ENCODE measurements at regions of chr14 and their contacts with region 1.

Region 1: DNA sequence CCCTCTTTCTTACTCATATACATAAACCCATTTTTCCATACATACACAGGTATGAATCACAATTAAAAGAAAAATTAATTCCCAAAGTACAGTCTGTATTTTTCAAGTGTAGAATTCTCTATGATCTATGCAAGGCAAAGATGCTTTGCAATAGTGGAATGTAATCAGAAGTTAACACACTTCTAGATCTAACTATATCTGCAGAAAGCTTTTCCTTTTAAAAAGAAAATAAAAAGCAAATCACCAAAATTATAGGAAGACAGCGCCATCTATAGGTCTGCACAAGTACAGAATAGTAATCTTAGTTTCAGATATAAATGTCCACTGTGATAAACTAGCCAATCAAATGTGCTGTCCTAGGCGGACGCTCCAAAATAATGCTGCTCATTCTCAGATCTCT is 22.0 kb downstream of the SLC25A21 start:
- DNase-seq: no peak
- ATAC-seq: peak; percentile 63
- H3K4me3 ChIP-seq: no peak overlapping the region
- H3K27ac ChIP-seq: no peak overlapping the region
- H3K4me1 ChIP-seq: no peaks in the 10 kb centered on the region
- H3K27me3 ChIP-seq: no peaks in the 10 kb centered on the region
- CTCF ChIP-seq: peak; percentile 51 to 76 (median 61)
- POLR2A ChIP-seq: no peak

Region 2: GRCh38 chr14:36553656-36554260 is 596.7 kb before region 1 on chr14:
- intact Hi-C with region 1: loop called (anchors 10 kb)
- DNase-seq: peak; percentile 25 to 53 (median 40)
- ATAC-seq: peak; percentile 73
- H3K4me3 ChIP-seq: no peak overlapping the region
- H3K27ac ChIP-seq: no peak overlapping the region
- H3K4me1 ChIP-seq: no peaks in the 10 kb centered on the region
- H3K27me3 ChIP-seq: no peaks in the 10 kb centered on the region
- CTCF ChIP-seq: peak; percentile 57 to 72 (median 60)
- POLR2A ChIP-seq: no peak

Region 3: DNA sequence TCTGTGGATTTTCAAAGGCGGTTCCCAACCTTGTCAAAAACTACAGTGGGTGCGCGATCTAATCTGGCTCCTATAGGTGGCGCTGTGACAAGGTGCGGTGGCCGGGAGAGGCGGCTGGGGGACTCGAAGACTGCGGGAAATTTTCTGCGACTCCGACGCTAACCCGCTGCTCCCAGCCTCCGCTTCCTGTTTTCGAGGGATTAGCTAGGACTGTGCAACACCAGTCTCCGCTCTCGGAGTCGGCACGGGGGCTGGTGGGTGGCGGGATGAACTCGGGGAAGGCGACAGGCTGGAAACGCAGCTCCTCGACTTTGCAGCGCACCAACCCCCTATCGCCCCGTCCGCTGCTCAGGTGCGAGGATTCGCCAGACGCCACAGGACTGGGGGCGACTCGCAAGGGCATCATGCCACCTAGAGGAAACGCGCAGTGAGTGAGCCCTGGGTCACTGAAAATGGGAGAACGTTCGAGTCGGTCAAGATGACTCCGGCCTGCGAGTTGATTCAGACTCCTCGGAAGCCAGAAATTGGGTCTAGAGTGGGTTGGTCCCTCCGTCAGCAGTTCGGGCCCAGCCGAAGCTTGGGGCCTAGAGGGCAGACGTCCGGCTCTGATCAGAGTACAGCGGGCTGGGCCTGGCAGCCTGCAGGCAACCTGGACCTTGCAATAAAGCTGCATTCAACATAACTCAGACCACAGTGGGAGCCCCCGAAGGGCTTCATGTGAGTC is 494.3 kb before region 1 on chr14:
- intact Hi-C with region 1: loop called (anchors 10 kb)
- DNase-seq: peak in 3 of 4 donors; percentile 20 to 44 (median 36)
- ATAC-seq: peak; percentile 36
- H3K4me3 ChIP-seq: no peak overlapping the region
- H3K27ac ChIP-seq: no peak overlapping the region
- H3K4me1 ChIP-seq: peaks cover 36% of the 10 kb centered on the region
- H3K27me3 ChIP-seq: peaks cover 0 to 73% of the 10 kb centered on the region in 2 donors
- CTCF ChIP-seq: peak; percentile 23 to 59 (median 40)
- POLR2A ChIP-seq: no peak